CD8-positive, alpha-beta T cell (primary cell): ENCODE measurements at regions of chr7 and their contacts with region 1.

Region 1: GRCh38 chr7:142308326-142308725 is 50.5 kb upstream of the PRSS58 start:
- DNase-seq: no peak
- ATAC-seq: no peak
- H3K4me3 ChIP-seq: no peak overlapping the region
- H3K4me3 Mint-ChIP-seq: peak overlapping the region; percentile 64
- H3K27ac ChIP-seq: peak overlapping the region in 1 of 2 experiments; percentile 15
- H3K27ac Mint-ChIP-seq: peak overlapping the region; percentile 41
- H3K4me1 ChIP-seq: peaks cover 20% of the 10 kb centered on the region
- H3K4me1 Mint-ChIP-seq: peaks cover 19% of the 10 kb centered on the region
- H3K27me3 ChIP-seq: no peaks in the 10 kb centered on the region
- H3K27me3 Mint-ChIP-seq: no peaks in the 10 kb centered on the region
- CTCF ChIP-seq: no peak

Region 2: GRCh38 chr7:141685285-141686023 is 622.9 kb before region 1 on chr7:
- CTCF ChIA-PET with region 1: no interaction called
- POLR2A ChIA-PET with region 1: no interaction called
- intact Hi-C with region 1: no loop called
- DNase-seq: no peak
- ATAC-seq: no peak
- H3K4me3 ChIP-seq: no peak overlapping the region
- H3K4me3 Mint-ChIP-seq: no peak overlapping the region
- H3K27ac ChIP-seq: no peak overlapping the region
- H3K27ac Mint-ChIP-seq: no peak overlapping the region
- H3K4me1 ChIP-seq: no peaks in the 10 kb centered on the region
- H3K4me1 Mint-ChIP-seq: peaks cover 31% of the 10 kb centered on the region
- H3K27me3 ChIP-seq: no peaks in the 10 kb centered on the region
- H3K27me3 Mint-ChIP-seq: no peaks in the 10 kb centered on the region
- CTCF ChIP-seq: no peak

Region 3: DNA sequence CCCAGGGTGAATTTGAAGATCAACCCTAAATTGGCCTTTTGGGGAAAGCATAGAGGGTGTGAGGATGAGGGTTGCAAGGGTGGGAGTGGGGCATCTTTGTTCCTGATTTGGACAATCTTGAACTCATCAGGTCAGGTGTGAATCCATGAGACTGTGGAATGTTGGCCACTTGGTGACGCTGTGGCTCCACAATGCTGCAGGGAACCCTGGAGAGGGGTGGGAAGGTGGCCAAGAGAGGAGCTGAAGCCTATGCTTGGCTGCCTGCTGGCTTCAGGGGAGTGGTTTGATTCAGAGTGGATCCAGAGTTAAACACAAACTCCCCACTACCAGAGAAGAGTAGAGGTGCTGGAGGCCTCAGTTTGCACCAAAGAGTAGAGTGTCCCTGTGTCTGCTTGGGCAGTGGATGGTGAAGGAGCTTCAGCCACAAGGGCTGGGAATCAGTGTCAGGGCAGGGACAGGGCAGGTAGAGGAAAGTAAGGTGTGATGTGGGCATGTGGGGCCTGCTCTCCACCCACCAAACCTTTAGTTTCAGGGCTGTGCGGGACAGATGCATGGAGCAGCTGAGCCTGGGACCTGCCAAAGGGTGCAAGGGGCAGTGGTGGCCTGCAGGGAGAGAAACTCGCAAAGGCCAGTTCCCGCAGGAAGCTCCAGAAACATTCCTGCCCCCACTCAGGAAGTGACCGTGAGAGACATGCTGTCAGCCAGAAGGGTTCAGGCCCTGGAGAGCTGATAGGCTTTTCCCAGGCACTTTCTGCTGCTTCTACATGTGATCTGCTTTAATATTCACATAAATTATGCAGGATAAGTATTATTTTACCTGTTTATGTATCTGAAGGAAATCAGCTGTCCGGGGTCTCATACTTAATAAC is 30.5 kb after region 1 on chr7:
- CTCF ChIA-PET with region 1: interaction called, 4 read pairs
- POLR2A ChIA-PET with region 1: interaction called, 3 read pairs
- intact Hi-C with region 1: loop called (anchors 1 kb)
- DNase-seq: peak in 3 of 9 experiments; percentile 33 to 53 (median 34)
- ATAC-seq: peak; percentile 26
- H3K4me3 ChIP-seq: no peak overlapping the region
- H3K4me3 Mint-ChIP-seq: no peak overlapping the region
- H3K27ac ChIP-seq: no peak overlapping the region
- H3K27ac Mint-ChIP-seq: peak overlapping the region; percentile 45
- H3K4me1 ChIP-seq: no peaks in the 10 kb centered on the region
- H3K4me1 Mint-ChIP-seq: peaks cover 13% of the 10 kb centered on the region
- H3K27me3 ChIP-seq: no peaks in the 10 kb centered on the region
- H3K27me3 Mint-ChIP-seq: no peaks in the 10 kb centered on the region
- CTCF ChIP-seq: no peak